MCF 10A (cell line): ENCODE measurements at regions of chr3 and their contacts with region 1.

Region 1: DNA sequence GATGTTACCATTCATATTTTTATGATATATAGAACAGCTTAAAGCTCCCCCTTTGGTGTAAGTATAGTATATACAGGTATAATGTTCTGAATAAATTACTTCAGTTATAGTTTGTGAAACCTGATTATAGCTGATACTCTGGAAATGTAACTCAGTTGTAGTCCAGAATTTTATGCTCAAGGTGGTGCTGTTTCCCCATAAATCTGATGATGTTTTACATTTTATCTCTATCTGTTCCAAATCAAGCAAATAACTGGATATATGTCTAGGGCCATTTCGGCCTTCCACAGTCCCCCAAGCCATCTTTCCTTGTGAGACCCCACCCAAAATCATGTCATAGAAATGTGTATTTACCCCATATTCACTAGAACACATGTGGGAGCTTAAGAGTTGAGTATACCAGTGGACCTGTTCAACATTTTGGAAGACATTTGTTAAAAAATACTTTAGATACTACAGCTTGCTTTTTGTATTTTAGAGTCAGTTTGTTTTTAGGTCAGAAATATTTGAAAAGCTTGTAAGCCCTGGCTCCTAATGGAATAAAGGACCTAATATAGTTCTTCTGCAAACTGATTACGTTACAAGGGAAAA is 107.1 kb downstream of the ATG7 start:
- DNase-seq: peak; percentile 59
- H3K4me3 Mint-ChIP-seq: no peak overlapping the region
- H3K27ac Mint-ChIP-seq: peak overlapping the region; percentile 79
- H3K4me1 Mint-ChIP-seq: peaks cover 17% of the 10 kb centered on the region
- H3K27me3 Mint-ChIP-seq: no peaks in the 10 kb centered on the region
- CTCF ChIP-seq: peak; percentile 72

Region 2: GRCh38 chr3:11037241-11037873 is 342.0 kb before region 1 on chr3:
- CTCF ChIA-PET with region 1: no interaction called
- POLR2A ChIA-PET with region 1: no interaction called
- intact Hi-C with region 1: no loop called
- DNase-seq: no peak
- H3K4me3 Mint-ChIP-seq: no peak overlapping the region
- H3K27ac Mint-ChIP-seq: no peak overlapping the region
- H3K4me1 Mint-ChIP-seq: no peaks in the 10 kb centered on the region
- H3K27me3 Mint-ChIP-seq: peaks cover 71% of the 10 kb centered on the region
- CTCF ChIP-seq: no peak

Region 3: GRCh38 chr3:11288786-11289682 is 90.3 kb before region 1 on chr3:
- CTCF ChIA-PET with region 1: no interaction called
- POLR2A ChIA-PET with region 1: no interaction called
- intact Hi-C with region 1: no loop called
- DNase-seq: peak; percentile 93
- H3K4me3 Mint-ChIP-seq: peak overlapping the region; percentile 40
- H3K27ac Mint-ChIP-seq: peak overlapping the region; percentile 89
- H3K4me1 Mint-ChIP-seq: peaks cover 39% of the 10 kb centered on the region
- H3K27me3 Mint-ChIP-seq: no peaks in the 10 kb centered on the region
- CTCF ChIP-seq: no peak

Region 4: DNA sequence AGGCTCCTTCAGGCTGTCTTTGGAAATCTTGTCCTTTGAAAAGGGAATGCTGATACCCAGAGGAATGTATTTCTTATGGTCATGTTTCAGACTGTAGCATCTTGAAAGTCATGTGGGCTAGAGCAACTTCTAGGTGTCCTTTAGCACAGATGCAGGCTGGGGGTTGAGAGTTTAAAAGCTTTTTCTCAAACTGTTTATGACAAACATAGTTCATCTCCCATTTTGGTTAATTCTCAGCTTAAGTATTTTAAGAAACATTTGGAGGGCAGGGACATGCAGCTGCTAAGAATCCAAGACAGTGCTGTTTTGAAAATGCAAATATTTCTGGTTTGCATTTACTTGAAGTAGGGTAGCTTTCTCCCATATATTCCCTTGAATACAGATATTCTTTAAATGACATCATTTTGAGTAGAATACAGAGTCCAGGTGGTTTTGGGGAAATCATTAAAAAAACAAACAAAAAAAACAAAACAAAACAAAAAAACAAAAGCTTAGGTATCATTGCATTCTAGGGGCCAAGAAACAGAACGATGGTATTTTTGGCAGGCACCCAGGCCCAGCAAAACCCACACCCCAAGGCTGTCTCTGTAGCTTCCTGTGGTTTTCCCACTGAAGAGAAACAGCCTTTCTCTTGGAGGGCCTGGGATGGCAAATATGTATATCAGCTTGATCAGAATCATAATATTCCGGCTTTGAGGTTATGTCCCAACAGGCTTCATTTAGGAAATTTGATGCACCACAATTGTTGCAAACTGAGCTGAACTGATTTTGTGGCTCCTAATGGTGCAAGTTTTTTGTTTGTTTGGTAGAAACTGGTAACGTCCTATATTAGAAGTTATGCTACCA is 12.9 kb after region 1 on chr3:
- CTCF ChIA-PET with region 1: interaction called, 17 read pairs
- POLR2A ChIA-PET with region 1: no interaction called
- intact Hi-C with region 1: no loop called
- DNase-seq: peak; percentile 79
- H3K4me3 Mint-ChIP-seq: no peak overlapping the region
- H3K27ac Mint-ChIP-seq: no peak overlapping the region
- H3K4me1 Mint-ChIP-seq: peaks cover 29% of the 10 kb centered on the region
- H3K27me3 Mint-ChIP-seq: no peaks in the 10 kb centered on the region
- CTCF ChIP-seq: no peak

Region 5: GRCh38 chr3:11643605-11644087 is 264.3 kb after region 1 on chr3 and contains the start of gene VGLL4:
- CTCF ChIA-PET with region 1: interaction called, 20 read pairs
- POLR2A ChIA-PET with region 1: interaction called, 3 read pairs
- intact Hi-C with region 1: loop called (anchors 2 kb)
- DNase-seq: peak; percentile 85
- H3K4me3 Mint-ChIP-seq: peak within 1 kb of the TSS; percentile 93
- H3K27ac Mint-ChIP-seq: peak within 1 kb of the TSS; percentile 96
- H3K4me1 Mint-ChIP-seq: peaks cover 21% of the 10 kb centered on the region
- H3K27me3 Mint-ChIP-seq: no peaks in the 10 kb centered on the region
- CTCF ChIP-seq: no peak
- total RNA-seq, gene VGLL4: 31.3 and 31.7 TPM in 2 replicates

Region 6: DNA sequence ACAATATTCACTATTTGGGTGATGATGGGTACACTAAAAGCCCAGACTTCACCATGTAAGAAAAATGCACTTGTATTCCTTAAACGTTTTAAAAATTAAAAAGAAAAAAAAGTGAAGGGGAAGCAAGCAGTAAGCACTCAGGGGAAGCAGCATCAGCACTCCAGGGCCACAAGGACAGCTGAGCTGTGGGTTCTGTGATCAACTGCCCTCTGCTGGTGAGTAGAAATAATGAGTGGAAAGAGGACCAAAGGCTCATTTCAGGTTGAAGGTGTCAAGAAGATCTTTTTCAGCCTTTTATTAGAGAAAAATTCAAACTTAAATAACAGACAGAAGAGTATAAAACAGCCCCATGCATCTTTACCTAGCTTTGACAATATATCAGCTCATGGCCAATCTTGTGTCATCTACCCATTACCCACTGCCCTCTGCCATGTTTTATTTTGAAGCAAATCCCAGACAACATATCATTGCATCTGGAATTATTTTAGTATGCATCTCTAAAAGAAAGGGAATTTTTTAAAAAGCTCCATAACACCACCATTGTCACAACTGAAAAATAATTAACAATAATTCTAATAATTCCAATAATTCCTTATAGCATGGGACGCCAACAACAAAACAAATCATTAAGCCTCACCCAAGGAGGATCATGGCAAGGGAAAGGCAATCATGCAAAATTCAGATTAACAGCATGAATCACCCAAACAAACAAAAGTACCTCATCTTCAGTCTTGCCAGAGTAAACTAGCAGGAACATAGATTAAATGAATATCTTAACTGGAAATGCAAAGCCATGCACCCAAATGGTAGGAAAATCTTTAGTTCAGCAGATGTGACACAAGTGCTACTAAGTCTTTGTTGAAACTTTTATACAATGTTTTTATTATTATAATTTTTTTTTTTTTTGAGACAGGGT is 424.9 kb after region 1 on chr3:
- CTCF ChIA-PET with region 1: interaction called, 39 read pairs
- POLR2A ChIA-PET with region 1: interaction called, 3 read pairs
- intact Hi-C with region 1: loop called (anchors 1 kb)
- DNase-seq: peak; percentile 64
- H3K4me3 Mint-ChIP-seq: no peak overlapping the region
- H3K27ac Mint-ChIP-seq: no peak overlapping the region
- H3K4me1 Mint-ChIP-seq: no peaks in the 10 kb centered on the region
- H3K27me3 Mint-ChIP-seq: no peaks in the 10 kb centered on the region
- CTCF ChIP-seq: peak; percentile 71

Region 7: DNA sequence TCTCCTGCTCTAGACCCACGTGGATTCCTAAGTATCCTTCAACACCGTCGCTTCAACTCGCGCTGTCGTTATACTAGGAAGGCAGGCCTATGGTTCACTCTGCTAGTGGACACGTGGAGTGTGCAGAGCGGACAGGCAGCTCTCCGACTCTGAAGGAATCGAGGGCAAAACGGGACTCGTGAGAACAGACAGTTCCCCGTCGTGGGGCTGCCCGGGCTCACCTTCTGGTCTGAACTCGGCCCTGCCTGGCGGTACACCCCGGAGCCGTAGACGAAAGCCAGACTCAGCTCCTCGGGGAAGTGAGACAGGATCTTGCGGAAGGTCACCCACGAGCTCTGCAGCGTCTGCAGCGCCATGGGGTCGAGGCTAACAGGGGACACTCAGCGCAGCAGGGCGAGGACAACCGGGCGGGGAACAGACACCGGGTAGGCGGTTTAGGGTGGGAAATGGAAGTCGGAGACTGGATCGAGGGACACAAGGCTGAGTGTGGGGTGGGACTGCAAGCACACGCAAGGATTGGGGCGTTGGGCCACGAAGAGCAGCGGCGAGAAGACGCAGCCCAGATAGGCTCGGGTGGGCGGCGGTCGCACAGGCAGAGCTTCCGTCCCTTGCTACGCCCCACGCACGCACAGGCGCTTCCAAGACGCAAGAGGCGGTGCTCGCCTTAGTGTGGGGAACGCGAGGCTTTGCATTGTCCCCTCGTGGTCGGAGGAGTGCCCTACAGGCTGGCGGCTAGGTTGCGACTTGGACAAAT is 467.1 kb after region 1 on chr3 and contains the start of gene TAMM41:
- CTCF ChIA-PET with region 1: interaction called, 14 read pairs
- POLR2A ChIA-PET with region 1: no interaction called
- intact Hi-C with region 1: loop called (anchors 5 kb)
- DNase-seq: peak; percentile 90
- H3K4me3 Mint-ChIP-seq: peak within 1 kb of the TSS; percentile 99
- H3K27ac Mint-ChIP-seq: peak within 1 kb of the TSS; percentile 94
- H3K4me1 Mint-ChIP-seq: peaks cover 18% of the 10 kb centered on the region
- H3K27me3 Mint-ChIP-seq: peaks cover 2% of the 10 kb centered on the region
- CTCF ChIP-seq: peak; percentile 51
- total RNA-seq, gene TAMM41: 19.8 and 26.2 TPM in 2 replicates